A673 (cell line): ENCODE measurements at regions of chr1 and their contacts with region 1.

Region 1: GRCh38 chr1:156728597-156729462 is at the start of gene ISG20L2:
- DNase-seq: peak; percentile 99
- H3K4me3 ChIP-seq: peak within 1 kb of the TSS; percentile 95
- H3K27ac ChIP-seq: peak within 1 kb of the TSS; percentile 96
- H3K4me1 ChIP-seq: peaks cover 23% of the 10 kb centered on the region
- H3K27me3 ChIP-seq: no peaks in the 10 kb centered on the region
- CTCF ChIP-seq: no peak
- total RNA-seq, gene ISG20L2: 45.7 and 46.5 TPM in 2 replicates

Region 2: DNA sequence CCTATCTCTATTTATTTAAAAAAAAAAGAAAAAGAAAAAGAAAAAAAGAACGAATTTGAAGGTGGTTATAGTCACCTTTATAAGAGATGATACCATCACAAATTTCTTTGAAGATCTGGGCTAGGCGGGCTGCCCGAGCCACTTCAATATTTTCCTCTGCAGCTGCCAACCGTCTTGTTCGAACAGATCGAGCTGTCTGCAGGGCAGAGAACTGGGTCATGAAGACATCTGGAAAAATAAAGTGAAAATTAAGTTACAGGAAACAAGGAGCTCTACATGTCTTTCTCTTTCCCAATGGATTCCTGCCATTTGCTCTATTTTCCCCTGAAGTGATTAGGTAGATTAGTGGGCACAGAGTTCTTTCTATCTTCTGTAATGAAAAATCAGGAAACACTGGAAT is 1376.2 kb before region 1 on chr1:
- CTCF ChIA-PET with region 1: no interaction called
- POLR2A ChIA-PET with region 1: no interaction called
- intact Hi-C with region 1: no loop called
- DNase-seq: no peak
- H3K4me3 ChIP-seq: no peak overlapping the region
- H3K27ac ChIP-seq: no peak overlapping the region
- H3K4me1 ChIP-seq: no peaks in the 10 kb centered on the region
- H3K27me3 ChIP-seq: no peaks in the 10 kb centered on the region
- CTCF ChIP-seq: no peak

Region 3: GRCh38 chr1:156233426-156234127 is 495.3 kb before region 1 on chr1:
- CTCF ChIA-PET with region 1: interaction called, 18 read pairs
- POLR2A ChIA-PET with region 1: no interaction called
- intact Hi-C with region 1: no loop called
- DNase-seq: peak; percentile 70
- H3K4me3 ChIP-seq: no peak overlapping the region
- H3K27ac ChIP-seq: no peak overlapping the region
- H3K4me1 ChIP-seq: peaks cover 12% of the 10 kb centered on the region
- H3K27me3 ChIP-seq: no peaks in the 10 kb centered on the region
- CTCF ChIP-seq: no peak

Region 4: DNA sequence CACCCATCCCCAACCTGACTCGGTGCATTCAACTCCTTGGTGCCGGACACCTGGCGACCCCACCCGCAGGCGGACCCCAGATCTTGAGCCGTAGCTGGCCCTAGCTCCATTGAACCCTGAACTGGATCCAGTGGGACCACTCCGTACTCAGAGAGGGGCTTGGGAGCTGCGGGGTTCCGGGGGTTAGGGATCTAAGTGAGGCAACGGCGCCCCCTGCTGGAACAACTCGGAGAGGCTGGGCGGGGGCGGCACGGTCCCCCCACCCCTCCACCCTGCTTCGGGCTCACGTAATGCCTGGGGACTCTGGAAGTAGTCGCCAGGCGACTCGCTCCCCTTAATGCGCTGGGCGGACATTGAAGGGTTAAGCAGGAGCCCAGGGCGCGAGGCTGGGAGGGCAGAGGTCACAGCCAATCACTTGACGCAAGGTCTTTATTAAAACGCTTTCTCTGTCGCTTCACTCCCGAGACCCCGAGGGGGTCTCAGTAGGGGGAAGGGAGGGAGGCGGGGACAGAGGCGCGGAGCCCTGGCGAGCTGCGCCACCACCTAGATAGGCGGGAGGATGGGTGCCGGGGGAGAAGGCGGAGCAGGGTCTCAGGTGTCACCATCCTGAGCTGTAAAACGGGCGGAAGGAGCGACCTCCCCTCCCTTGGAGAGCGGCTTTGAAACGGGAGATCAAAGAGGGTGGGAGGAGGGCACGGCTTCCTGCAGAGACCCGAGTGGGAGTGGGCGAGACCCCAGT is 22.7 kb before region 1 on chr1:
- CTCF ChIA-PET with region 1: interaction called, 13 read pairs
- POLR2A ChIA-PET with region 1: no interaction called
- intact Hi-C with region 1: no loop called
- DNase-seq: peak; percentile 77
- H3K4me3 ChIP-seq: peak overlapping the region; percentile 42
- H3K27ac ChIP-seq: no peak overlapping the region
- H3K4me1 ChIP-seq: peaks cover 34% of the 10 kb centered on the region
- H3K27me3 ChIP-seq: peaks cover 5% of the 10 kb centered on the region
- CTCF ChIP-seq: peak; percentile 91

Region 5: GRCh38 chr1:156740679-156741612 is 12.1 kb after region 1 on chr1 and contains the start of gene MRPL24:
- CTCF ChIA-PET with region 1: interaction called, 11 read pairs
- POLR2A ChIA-PET with region 1: interaction called, 11 read pairs
- intact Hi-C with region 1: no loop called
- DNase-seq: peak; percentile 100
- H3K4me3 ChIP-seq: peak within 1 kb of the TSS; percentile 65
- H3K27ac ChIP-seq: peak within 1 kb of the TSS; percentile 77
- H3K4me1 ChIP-seq: peaks cover 14% of the 10 kb centered on the region
- H3K27me3 ChIP-seq: no peaks in the 10 kb centered on the region
- CTCF ChIP-seq: no peak
- total RNA-seq, gene MRPL24: 85.7 and 92.9 TPM in 2 replicates

Region 6: GRCh38 chr1:156860113-156860627 is 131.3 kb after region 1 on chr1:
- CTCF ChIA-PET with region 1: interaction called, 62 read pairs
- POLR2A ChIA-PET with region 1: no interaction called
- intact Hi-C with region 1: loop called (anchors 1 kb)
- DNase-seq: peak; percentile 63
- H3K4me3 ChIP-seq: peak overlapping the region; percentile 55
- H3K27ac ChIP-seq: no peak overlapping the region
- H3K4me1 ChIP-seq: peaks cover 10% of the 10 kb centered on the region
- H3K27me3 ChIP-seq: peaks cover 27% of the 10 kb centered on the region
- CTCF ChIP-seq: peak; percentile 94

Region 7: GRCh38 chr1:156980551-156980950 is 251.7 kb after region 1 on chr1:
- CTCF ChIA-PET with region 1: no interaction called
- POLR2A ChIA-PET with region 1: no interaction called
- intact Hi-C with region 1: no loop called
- DNase-seq: no peak
- H3K4me3 ChIP-seq: no peak overlapping the region
- H3K27ac ChIP-seq: no peak overlapping the region
- H3K4me1 ChIP-seq: no peaks in the 10 kb centered on the region
- H3K27me3 ChIP-seq: no peaks in the 10 kb centered on the region
- CTCF ChIP-seq: no peak